ENCODE measurements at regions of chr18 and their contacts with region 1.

Region 1: GRCh38 chr18:50902797-50903196 is 23.9 kb downstream of the ME2 start:
- DNase-seq: no peak
- H3K4me3 Mint-ChIP-seq: no peak overlapping the region
- H3K27ac Mint-ChIP-seq: no peak overlapping the region
- H3K4me1 Mint-ChIP-seq: peaks cover 28% of the 10 kb centered on the region
- H3K27me3 Mint-ChIP-seq: no peaks in the 10 kb centered on the region

Region 2: GRCh38 chr18:50862401-50862800 is 40.4 kb before region 1 on chr18:
- CTCF ChIA-PET with region 1: no interaction called
- POLR2A ChIA-PET with region 1: no interaction called
- intact Hi-C with region 1: no loop called
- DNase-seq: no peak
- H3K4me3 Mint-ChIP-seq: no peak overlapping the region
- H3K27ac Mint-ChIP-seq: no peak overlapping the region
- H3K4me1 Mint-ChIP-seq: no peaks in the 10 kb centered on the region
- H3K27me3 Mint-ChIP-seq: peaks cover 4% of the 10 kb centered on the region

Region 3: GRCh38 chr18:50886929-50887328 is 15.9 kb before region 1 on chr18:
- CTCF ChIA-PET with region 1: no interaction called
- POLR2A ChIA-PET with region 1: no interaction called
- intact Hi-C with region 1: loop called (anchors 2 kb)
- DNase-seq: peak; percentile 36
- H3K4me3 Mint-ChIP-seq: no peak overlapping the region
- H3K27ac Mint-ChIP-seq: peak overlapping the region; percentile 31
- H3K4me1 Mint-ChIP-seq: peaks cover 27% of the 10 kb centered on the region
- H3K27me3 Mint-ChIP-seq: no peaks in the 10 kb centered on the region

Region 4: GRCh38 chr18:50917021-50917420 is 14.2 kb after region 1 on chr18:
- CTCF ChIA-PET with region 1: no interaction called
- POLR2A ChIA-PET with region 1: no interaction called
- intact Hi-C with region 1: no loop called
- DNase-seq: no peak
- H3K4me3 Mint-ChIP-seq: no peak overlapping the region
- H3K27ac Mint-ChIP-seq: peak overlapping the region; percentile 19
- H3K4me1 Mint-ChIP-seq: peaks cover 17% of the 10 kb centered on the region
- H3K27me3 Mint-ChIP-seq: no peaks in the 10 kb centered on the region

Region 5: GRCh38 chr18:50973367-50974126 is 70.8 kb after region 1 on chr18:
- CTCF ChIA-PET with region 1: no interaction called
- POLR2A ChIA-PET with region 1: no interaction called
- intact Hi-C with region 1: loop called (anchors 1 kb)
- DNase-seq: peak; percentile 23
- H3K4me3 Mint-ChIP-seq: no peak overlapping the region
- H3K27ac Mint-ChIP-seq: peak overlapping the region; percentile 75
- H3K4me1 Mint-ChIP-seq: peaks cover 34% of the 10 kb centered on the region
- H3K27me3 Mint-ChIP-seq: no peaks in the 10 kb centered on the region